Gastrocnemius medialis (tissue), 4 donors: ENCODE measurements at regions of chr13 and their contacts with region 1.

Region 1: DNA sequence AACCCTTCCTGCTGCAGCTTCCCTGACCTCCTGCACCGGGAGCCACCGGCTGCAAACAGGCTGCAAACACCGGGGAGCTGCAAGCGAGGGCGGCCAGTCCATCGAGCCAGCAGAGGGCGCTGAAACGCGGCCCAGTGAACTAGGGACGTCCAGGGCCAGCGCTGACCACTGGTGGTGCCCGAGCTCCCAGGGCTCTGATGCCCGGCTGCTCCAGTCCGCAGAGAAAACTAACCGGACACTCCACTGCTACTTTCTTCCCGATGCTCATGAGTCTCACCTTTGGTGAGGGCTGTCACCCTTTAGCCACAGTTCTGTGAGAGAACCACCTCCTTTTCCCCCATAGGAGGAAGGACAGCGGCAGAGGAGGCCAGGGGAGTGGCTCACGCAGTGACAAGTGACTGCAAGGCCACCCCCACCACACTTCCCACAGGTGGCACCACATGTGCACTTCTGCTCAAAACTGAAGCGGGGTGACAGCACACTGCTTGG is 82.8 kb upstream of the MTIF3 start:
- DNase-seq: peak; percentile 53 to 59
- ATAC-seq: peak; percentile 78 to 96
- H3K4me3 ChIP-seq: peak overlapping the region in 1 of 4 donors; percentile 32
- H3K27ac ChIP-seq: no peak overlapping the region
- H3K4me1 ChIP-seq: peaks cover 3 to 6% of the 10 kb centered on the region in 2 donors
- H3K27me3 ChIP-seq: no peaks in the 10 kb centered on the region
- CTCF ChIP-seq: peak; percentile 71 to 92 (median 86)
- POLR2A ChIP-seq: no peak

Region 2: GRCh38 chr13:26132756-26133155 is 1400.4 kb before region 1 on chr13:
- in situ Hi-C with region 1: no loop called
- intact Hi-C with region 1: no loop called
- DNase-seq: no peak
- ATAC-seq: no peak
- H3K4me3 ChIP-seq: no peak overlapping the region
- H3K27ac ChIP-seq: no peak overlapping the region
- H3K4me1 ChIP-seq: no peaks in the 10 kb centered on the region
- H3K27me3 ChIP-seq: no peaks in the 10 kb centered on the region
- CTCF ChIP-seq: no peak
- POLR2A ChIP-seq: no peak

Region 3: GRCh38 chr13:26779321-26779720 is 753.9 kb before region 1 on chr13:
- in situ Hi-C with region 1: no loop called
- intact Hi-C with region 1: no loop called
- DNase-seq: no peak
- ATAC-seq: no peak
- H3K4me3 ChIP-seq: no peak overlapping the region
- H3K27ac ChIP-seq: no peak overlapping the region
- H3K4me1 ChIP-seq: no peaks in the 10 kb centered on the region
- H3K27me3 ChIP-seq: no peaks in the 10 kb centered on the region
- CTCF ChIP-seq: no peak
- POLR2A ChIP-seq: no peak

Region 4: DNA sequence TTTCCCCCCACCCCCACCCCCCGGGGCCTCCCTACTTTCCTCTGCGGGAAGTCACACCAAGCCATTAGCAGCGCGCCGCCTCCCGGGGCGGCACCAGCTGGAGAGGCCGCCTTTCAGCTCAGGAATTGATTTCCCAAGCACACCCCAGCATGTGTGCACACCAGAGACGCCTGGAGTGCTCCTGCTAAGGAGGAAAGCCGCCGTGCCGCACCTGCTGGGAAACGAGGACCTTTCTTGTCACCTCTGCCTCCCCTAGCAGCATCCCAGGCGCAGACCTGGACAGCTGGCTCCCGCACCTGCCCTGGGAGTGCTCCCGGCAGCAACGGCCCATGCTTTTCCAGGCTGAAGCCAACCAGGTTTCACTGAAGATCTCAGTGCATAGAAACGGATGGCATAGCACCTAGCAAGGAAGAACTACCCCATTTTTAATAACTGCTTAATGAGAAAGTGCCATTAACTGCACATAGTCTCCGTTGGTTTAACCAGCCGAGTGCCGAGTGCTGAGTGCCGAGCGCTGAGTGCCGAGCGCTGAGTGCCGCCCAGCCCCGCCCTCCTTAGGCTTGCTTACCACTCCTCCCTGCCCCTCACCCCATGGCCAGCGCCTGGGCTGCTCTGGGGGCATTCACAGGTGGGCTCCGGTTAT is 526.6 kb before region 1 on chr13:
- in situ Hi-C with region 1: no loop called
- intact Hi-C with region 1: no loop called
- DNase-seq: no peak
- ATAC-seq: no peak
- H3K4me3 ChIP-seq: peak overlapping the region; percentile 39 to 61 (median 42)
- H3K27ac ChIP-seq: no peak overlapping the region
- H3K4me1 ChIP-seq: peaks cover 3 to 12% of the 10 kb centered on the region in 2 donors
- H3K27me3 ChIP-seq: peaks cover 21 to 27% (median 23%) of the 10 kb centered on the region in 3 donors
- CTCF ChIP-seq: no peak
- POLR2A ChIP-seq: no peak

Region 5: DNA sequence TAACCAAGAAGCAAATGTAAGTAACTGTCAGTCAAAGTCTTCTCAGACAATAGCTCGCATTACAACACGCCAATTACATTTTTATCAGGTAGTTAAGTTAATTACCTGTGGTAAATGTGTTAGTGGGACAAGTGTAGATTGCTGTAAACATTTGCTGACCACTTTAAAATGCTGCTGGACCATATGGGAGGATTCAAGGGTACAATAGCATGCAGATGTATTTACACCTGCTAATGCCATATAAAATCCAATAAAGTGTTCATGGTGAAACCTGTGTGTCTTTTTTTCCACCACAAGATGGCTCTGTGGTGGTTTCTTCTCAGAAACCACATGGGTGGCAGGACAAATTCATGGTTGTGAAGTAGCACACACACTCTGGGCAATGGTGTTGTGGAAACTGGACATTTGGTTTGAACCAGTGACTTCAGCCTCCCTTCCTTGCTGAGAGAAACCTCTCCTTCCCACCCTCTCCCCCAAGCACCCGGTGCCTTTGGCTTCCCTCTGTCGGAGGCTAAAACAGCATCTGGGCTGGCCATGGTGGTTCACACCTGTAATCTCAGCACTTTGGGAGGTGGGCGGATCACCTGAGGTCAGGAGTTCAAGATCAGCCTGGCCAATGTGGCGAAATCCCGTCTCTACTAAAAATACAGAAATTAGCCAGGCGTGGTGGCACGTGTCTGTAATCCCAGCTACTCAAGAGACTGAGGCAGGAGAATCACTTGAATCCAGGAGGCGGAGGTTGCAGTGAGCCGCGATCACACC is 126.8 kb before region 1 on chr13:
- in situ Hi-C with region 1: no loop called
- intact Hi-C with region 1: loop called (anchors 5 kb)
- DNase-seq: no peak
- ATAC-seq: peak; percentile 77 to 80
- H3K4me3 ChIP-seq: no peak overlapping the region
- H3K27ac ChIP-seq: no peak overlapping the region
- H3K4me1 ChIP-seq: peaks cover 6 to 10% of the 10 kb centered on the region in 2 donors
- H3K27me3 ChIP-seq: no peaks in the 10 kb centered on the region
- CTCF ChIP-seq: peak; percentile 39 to 70 (median 61)
- POLR2A ChIP-seq: no peak

Region 6: DNA sequence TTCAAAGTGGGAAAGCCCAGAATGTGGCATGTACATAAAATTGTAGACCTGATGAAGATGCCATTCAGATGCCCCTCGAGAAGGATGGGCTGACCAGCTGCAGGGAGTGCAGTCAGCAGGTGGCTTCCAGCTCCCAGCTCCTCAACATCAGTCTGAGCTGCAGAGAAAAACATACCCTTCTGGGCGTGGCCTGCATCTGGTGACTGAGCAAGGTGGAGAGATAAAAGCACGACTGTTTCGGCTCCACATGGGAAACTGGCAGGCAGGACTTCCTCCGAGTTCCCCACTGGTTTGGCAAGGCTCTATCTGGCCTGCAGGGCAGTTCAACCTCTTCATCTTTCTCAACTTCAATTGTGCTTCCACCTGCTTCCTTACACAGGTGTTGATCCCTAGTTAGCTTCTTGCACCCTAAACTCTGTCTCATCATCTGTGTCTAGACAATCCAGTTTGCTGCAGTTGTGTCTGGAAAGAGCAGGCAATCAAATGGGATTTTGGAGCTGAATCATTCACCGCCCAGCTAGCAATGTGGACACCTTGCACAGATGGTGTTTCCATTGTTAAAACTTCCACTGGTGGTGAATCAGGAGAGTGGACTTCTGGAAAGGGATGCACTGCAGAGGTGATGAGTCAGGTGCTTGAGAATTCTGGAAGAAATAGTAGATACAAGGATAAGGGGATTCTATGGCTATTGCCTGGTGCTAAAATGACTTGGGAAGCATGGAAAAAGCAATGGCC is 145.3 kb after region 1 on chr13:
- in situ Hi-C with region 1: no loop called
- intact Hi-C with region 1: loop called (anchors 10 kb)
- DNase-seq: no peak
- ATAC-seq: no peak
- H3K4me3 ChIP-seq: no peak overlapping the region
- H3K27ac ChIP-seq: no peak overlapping the region
- H3K4me1 ChIP-seq: peaks cover 0 to 9% of the 10 kb centered on the region in 2 donors
- H3K27me3 ChIP-seq: no peaks in the 10 kb centered on the region
- CTCF ChIP-seq: no peak
- POLR2A ChIP-seq: no peak

Region 7: DNA sequence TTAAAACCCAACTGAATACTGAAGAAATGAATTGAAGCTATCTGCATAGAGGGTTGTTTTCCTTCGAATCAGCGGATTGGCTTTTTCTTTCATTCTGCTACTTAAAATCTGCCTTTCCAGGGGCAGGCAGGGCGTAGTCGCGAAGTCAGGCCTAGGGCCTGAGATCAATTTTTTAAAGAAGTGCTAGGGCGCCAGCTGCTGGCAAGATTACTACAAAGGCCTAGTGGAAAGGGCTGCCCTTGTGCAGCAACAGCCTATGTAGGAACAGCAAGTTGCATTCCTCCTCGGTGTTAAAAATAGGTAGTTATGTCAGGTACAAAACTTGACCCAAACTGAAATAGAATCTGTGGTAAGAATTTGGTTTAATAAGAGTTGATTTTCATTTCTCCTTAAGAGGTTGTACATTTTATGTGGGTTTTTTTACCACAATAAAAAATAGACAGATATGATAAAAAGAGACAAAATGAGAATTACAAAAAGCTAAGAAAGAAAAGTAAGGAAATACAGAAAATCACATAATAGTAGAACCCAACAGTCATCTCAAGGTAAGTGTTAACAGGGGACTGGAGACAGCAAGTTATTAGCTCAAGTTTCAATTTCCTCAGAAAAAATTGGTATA is 464.8 kb after region 1 on chr13:
- in situ Hi-C with region 1: loop called in 1 of 4 experiments (anchors 25 kb)
- intact Hi-C with region 1: no loop called
- DNase-seq: no peak
- ATAC-seq: no peak
- H3K4me3 ChIP-seq: no peak overlapping the region
- H3K27ac ChIP-seq: no peak overlapping the region
- H3K4me1 ChIP-seq: no peaks in the 10 kb centered on the region
- H3K27me3 ChIP-seq: no peaks in the 10 kb centered on the region
- CTCF ChIP-seq: no peak
- POLR2A ChIP-seq: no peak